Head of caudate nucleus (tissue), 42 donors: ENCODE measurements at regions of chr3 and their contacts with region 1.

Region 1: GRCh38 chr3:55485211-55485791 is 1.8 kb downstream of the WNT5A start:
- DNase-seq: peak in 40 of 42 donors; percentile 67 to 91 (median 79)

Region 2: DNA sequence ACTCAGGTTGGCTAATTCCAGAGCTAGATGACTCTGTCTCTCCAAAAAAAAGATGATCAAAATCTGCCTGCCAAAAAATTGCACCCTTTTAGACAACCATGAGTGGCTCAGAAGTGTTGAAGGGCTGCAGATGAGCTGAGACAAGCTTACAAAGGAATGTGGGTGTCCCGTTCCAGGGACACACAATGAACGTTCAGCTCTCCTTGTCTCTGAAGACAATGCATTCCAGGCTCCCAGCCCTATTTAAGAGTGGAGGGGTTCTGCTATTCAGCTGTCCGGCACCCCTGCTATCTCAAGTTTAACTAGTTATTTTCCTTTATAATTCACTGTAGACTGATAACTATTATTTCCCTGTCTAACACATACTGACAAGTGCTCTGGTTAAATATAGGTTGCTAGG is 356.9 kb after region 1 on chr3:
- intact Hi-C with region 1: no loop called
- DNase-seq: no peak

Region 3: DNA sequence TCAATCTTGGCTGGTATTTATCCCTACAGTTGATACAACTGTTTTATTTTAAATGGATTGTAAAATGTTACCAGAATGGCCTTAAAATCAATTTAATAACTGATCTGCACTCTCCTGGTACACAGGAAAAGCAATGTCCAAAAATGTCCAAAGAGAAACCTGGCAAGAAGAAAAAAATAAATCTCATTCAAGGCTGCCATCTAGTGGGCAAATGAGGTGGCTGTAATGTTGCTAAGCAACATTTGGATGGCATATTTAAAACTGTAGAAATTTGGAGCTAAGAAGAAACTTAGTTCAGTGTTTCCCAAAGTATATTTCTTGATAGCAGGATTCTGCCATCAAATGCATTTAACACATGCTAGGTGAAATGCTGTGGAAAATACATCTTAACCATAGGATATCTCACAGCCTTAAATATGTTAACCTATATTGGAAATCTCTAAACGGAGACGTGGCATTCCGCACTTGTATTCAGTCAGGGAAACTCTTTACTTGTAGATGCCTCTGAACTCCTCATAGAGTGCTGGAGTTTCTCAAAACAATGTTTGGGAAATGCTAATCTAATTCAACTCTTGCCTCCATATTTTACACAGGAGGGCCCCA is 766.1 kb after region 1 on chr3:
- intact Hi-C with region 1: loop called (anchors 10 kb)
- DNase-seq: peak in 29 of 42 donors; percentile 12 to 80 (median 49)